ENCODE measurements at regions of chr7 and their contacts with region 1.

Region 1: DNA sequence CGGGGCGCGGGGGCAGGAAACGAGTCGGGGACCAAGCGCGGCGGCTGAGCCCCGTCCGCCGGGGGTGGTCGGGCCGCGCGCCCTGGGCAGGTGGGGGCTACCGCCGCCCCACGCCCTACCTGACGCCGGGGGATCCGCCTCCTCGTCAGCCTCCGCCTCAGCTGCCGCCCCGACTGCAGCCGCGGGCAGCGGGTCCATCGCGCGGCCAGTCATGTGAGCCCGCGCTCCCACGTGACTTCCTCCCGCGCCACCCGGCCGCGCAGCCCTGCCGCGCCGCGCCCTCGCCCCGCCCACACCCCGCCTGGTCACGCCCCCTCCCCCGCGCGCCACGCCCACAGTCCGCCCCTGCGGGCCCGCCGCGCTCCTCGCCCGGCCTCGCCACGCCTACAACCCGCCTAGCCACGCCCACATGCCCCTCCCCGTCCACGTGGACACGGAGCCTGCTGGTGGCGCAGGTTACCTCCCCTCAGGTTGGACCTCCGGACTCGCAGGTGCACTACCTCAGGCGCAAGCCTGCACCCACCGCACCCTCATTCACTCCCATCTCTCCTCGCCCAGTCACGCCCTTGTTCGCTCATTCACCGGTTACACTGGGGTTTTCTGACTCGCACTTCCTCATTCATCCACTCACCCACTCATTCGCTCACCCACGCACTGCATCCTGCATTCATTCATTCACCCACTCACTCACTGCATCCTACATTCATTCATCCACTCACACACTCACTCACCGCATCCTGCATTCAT is at the start of gene SNX8:
- DNase-seq: peak; percentile 86
- H3K4me3 ChIP-seq: peak within 1 kb of the TSS; percentile 97
- H3K27ac ChIP-seq: peak within 1 kb of the TSS; percentile 22
- H3K4me1 ChIP-seq: peaks cover 43% of the 10 kb centered on the region
- CTCF ChIP-seq: no peak
- total RNA-seq, gene SNX8: 4.3 and 12.1 TPM in 2 replicates

Region 2: GRCh38 chr7:2241580-2242540 is 72.5 kb before region 1 on chr7 and contains the starts of genes MRM2 and NUDT1:
- CTCF ChIA-PET with region 1: no interaction called
- POLR2A ChIA-PET with region 1: interaction called, 4 read pairs
- intact Hi-C with region 1: loop called (anchors 5 kb)
- DNase-seq: peak; percentile 87
- H3K4me3 ChIP-seq: peak within 1 kb of the TSS; percentile 99
- H3K27ac ChIP-seq: peak within 1 kb of the TSS; percentile 65
- H3K4me1 ChIP-seq: peaks cover 40% of the 10 kb centered on the region
- CTCF ChIP-seq: no peak; the same call in 1 of the 2 replicates
- total RNA-seq, gene MRM2: 45.1 and 49.3 TPM in 2 replicates
- total RNA-seq, gene NUDT1: 117 and 124 TPM in 2 replicates

Measured in OCI-LY7 (cell line).